Right cardiac atrium (tissue), 5 donors: ENCODE measurements at regions of chr11 and their contacts with region 1.

Region 1: DNA sequence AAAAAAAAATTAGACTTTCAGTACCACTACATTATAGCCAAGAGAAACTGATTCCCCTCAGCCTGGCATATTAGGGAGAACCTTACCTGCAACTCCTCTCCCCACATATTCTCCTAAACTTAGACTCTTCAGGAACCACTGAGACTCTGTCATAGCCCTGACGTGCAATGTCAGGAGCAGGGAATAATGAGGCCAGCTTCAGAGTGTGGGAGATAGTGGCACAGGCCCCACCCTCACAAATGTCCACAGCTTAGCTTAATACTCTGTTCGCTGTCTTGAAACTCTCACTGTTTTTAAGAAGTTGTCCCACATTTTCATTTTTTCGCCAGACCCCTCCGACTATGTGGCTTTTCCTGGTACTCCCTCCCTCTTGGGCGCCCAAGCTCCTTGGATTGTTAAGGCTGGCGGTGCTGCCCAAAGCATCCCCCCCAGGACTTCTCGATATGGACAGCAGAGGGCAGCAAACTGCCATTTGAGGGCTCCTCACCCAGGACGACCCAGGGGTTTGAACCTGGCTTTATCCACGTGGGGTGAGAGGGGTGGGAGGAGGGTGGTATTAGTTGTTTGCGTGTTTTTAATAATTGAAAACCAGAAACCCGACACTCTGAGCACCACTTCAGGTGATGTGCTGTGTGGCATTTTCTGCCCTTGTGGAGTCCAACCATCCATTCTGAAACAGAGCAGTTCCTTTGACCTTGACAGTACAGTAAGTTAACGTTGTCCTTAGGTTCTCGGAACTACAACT is 45.2 kb upstream of the RASSF10 start:
- DNase-seq: peak; percentile 68 to 86 (median 81)
- ATAC-seq: peak; percentile 89 to 94
- H3K4me3 ChIP-seq: no peak overlapping the region
- H3K27ac ChIP-seq: no peak overlapping the region
- H3K4me1 ChIP-seq: no peaks in the 10 kb centered on the region
- H3K27me3 ChIP-seq: no peaks in the 10 kb centered on the region

Region 2: DNA sequence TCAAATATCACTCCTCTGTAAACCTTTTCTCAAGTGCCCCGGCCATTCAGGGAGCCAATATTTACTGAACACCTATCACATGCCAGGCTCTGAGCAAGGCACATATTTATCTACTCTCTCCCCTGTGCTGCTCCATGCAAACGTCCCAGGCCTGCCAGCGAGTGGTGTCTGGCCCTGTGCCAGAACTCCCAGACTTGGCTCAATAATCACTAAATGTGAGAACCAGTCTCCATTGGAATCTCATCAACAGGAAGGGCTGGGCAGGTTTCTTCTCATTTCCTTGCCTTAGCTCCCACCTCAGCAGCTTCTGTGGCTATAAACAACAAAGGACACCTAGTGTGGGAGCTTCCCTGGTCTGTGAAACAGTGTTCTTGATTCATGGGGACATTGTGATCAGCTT is 66.9 kb after region 1 on chr11:
- intact Hi-C with region 1: no loop called
- DNase-seq: peak; percentile 53 to 71 (median 62)
- ATAC-seq: peak; percentile 66 to 81
- H3K4me3 ChIP-seq: no peak overlapping the region
- H3K27ac ChIP-seq: no peak overlapping the region
- H3K4me1 ChIP-seq: peaks cover 3% of the 10 kb centered on the region
- H3K27me3 ChIP-seq: no peaks in the 10 kb centered on the region

Region 3: DNA sequence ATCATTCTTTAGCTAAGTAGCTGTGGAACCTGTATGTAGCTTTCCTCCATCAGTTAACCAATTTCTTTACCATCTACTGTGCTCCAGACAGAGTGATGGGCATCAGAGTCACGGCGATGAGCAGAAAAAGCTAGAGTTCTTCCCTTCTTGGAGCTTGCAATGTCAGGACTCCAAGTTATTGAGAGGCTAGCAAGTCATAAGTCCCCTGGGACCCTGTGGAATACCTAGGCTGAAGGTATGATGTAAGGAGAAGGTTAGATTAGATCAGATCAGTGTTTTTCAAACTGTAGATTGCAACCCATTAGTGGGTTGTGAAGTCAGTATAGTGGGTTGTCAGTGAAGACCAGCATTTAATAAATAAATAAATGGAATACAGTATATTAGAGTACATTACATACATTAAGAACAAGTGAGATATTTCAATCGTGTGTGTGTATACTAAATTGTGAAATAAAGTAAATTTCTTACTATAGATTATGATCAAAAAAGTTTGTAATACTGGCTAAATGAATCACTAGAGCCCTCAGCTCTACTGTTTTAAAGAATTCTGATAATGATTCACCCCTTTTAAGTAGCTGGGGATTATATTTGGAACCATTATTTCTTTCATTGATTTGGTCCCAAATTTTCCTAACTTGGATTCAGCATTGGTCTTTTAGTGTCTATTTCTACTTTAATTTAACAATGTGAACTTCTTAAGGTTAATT is 97.5 kb after region 1 on chr11:
- intact Hi-C with region 1: no loop called
- DNase-seq: no peak
- ATAC-seq: no peak
- H3K4me3 ChIP-seq: no peak overlapping the region
- H3K27ac ChIP-seq: no peak overlapping the region
- H3K4me1 ChIP-seq: no peaks in the 10 kb centered on the region
- H3K27me3 ChIP-seq: no peaks in the 10 kb centered on the region

Region 4: GRCh38 chr11:13152736-13153533 is 189.0 kb after region 1 on chr11:
- intact Hi-C with region 1: loop called in 3 of 4 experiments (anchors 10 kb)
- DNase-seq: no peak
- ATAC-seq: no peak
- H3K4me3 ChIP-seq: no peak overlapping the region
- H3K27ac ChIP-seq: no peak overlapping the region
- H3K4me1 ChIP-seq: no peaks in the 10 kb centered on the region
- H3K27me3 ChIP-seq: no peaks in the 10 kb centered on the region

Region 5: GRCh38 chr11:13183094-13183825 is 219.3 kb after region 1 on chr11:
- intact Hi-C with region 1: loop called in 3 of 4 experiments (anchors 2 to 5 kb)
- DNase-seq: no peak
- ATAC-seq: peak in 1 of 2 donors; percentile 55
- H3K4me3 ChIP-seq: no peak overlapping the region
- H3K27ac ChIP-seq: no peak overlapping the region
- H3K4me1 ChIP-seq: no peaks in the 10 kb centered on the region
- H3K27me3 ChIP-seq: no peaks in the 10 kb centered on the region

Region 6: GRCh38 chr11:13343931-13344717 is 380.2 kb after region 1 on chr11:
- intact Hi-C with region 1: loop called in 1 of 4 experiments (anchors 10 kb)
- DNase-seq: peak in 2 of 3 donors; percentile 54 to 68
- ATAC-seq: peak; percentile 22 to 47
- H3K4me3 ChIP-seq: no peak overlapping the region
- H3K27ac ChIP-seq: no peak overlapping the region
- H3K4me1 ChIP-seq: peaks cover 10% of the 10 kb centered on the region
- H3K27me3 ChIP-seq: no peaks in the 10 kb centered on the region